ENCODE measurements at regions of chr1 and their contacts with region 1.

Region 1: GRCh38 chr1:156797212-156797871 is 19.3 kb downstream of the SH2D2A start:
- DNase-seq: peak; percentile 68

Region 2: DNA sequence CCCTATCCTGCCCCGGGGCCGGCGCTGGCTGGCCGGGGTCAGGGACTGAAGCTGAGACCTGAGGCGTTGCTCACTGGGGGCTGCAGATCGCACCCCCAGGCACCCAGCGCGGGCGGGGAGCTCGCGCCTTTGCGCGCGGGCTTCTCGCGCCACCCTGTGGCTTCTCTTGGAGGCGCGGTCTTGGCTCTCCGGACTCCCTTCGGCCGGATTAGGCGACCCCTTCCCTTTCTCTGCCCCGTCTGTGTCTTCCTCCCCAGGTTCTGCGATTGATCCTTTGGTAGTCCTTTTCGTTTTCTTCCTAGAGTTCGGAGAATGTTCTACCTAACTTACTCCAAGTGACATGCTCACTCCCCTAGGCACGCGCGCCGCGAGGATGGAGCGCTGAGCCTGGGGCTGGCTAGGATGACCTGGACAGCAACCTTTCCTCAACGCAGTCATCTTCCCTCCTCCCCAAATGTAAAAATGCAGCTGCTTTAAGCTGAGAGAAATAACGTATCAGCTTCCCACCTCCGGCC is 62.8 kb after region 1 on chr1:
- CTCF ChIA-PET with region 1: interaction called, 22 read pairs
- POLR2A ChIA-PET with region 1: interaction called, 4 read pairs
- DNase-seq: peak; percentile 86

Region 3: GRCh38 chr1:156874572-156875340 is 77.4 kb after region 1 on chr1:
- CTCF ChIA-PET with region 1: no interaction called
- POLR2A ChIA-PET with region 1: no interaction called
- DNase-seq: no peak

Measured in HEK293T (cell line).